HEK293 (cell line): ENCODE measurements at regions of chr1 and their contacts with region 1.

Region 1: DNA sequence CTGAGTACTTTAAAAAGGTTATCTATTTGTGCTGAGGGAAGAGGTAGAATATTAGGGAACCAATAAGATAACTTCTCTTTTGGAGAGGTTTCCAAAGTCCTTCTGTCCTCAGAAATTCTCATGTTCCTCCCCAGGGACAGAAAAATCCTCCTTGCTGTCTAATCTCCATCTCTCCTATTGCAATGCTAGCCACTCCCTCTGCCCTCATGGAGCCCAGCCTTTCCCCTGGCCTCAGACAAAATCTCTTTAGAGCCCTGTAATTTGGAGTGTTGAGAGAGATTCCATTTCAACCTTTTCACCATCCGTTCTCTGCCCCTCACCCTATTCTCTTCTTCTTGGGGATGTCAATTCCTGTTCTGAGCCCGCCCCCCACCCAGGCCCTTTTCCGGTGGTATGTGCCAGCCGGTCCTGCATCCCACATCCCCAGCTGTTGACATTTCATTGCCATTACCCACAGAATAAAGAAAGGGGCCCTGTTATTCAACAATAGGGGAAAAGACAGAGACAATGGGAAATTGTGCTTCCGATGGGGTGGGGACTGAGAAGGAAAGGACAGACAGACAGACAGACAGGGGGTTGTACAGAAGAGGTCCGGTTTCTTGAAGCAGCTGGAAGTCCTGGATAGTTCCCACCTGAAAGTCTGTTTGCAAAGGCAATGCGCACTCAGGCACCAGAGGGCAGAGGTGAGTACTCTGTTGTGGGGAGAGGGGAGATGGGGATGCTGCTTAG is at the start of gene HAPLN2:
- H3K4me3 ChIP-seq: no peak within 1 kb of the TSS
- H3K27ac ChIP-seq: no peak within 1 kb of the TSS
- H3K4me1 ChIP-seq: peaks cover 5% of the 10 kb centered on the region
- CTCF ChIP-seq: peak; percentile 54; the same call in 1 of the 2 replicates

Region 2: GRCh38 chr1:156553860-156554480 is 65.0 kb before region 1 on chr1:
- CTCF ChIA-PET with region 1: no interaction called
- POLR2A ChIA-PET with region 1: no interaction called
- H3K4me3 ChIP-seq: no peak overlapping the region
- H3K27ac ChIP-seq: no peak overlapping the region
- H3K4me1 ChIP-seq: no peaks in the 10 kb centered on the region
- CTCF ChIP-seq: no peak

Region 3: GRCh38 chr1:156601122-156601830 is 17.7 kb before region 1 on chr1 and contains the start of gene GPATCH4:
- CTCF ChIA-PET with region 1: interaction called, 30 read pairs
- POLR2A ChIA-PET with region 1: interaction called, 4 read pairs
- H3K4me3 ChIP-seq: peak within 1 kb of the TSS; percentile 65
- H3K27ac ChIP-seq: peak within 1 kb of the TSS; percentile 35
- H3K4me1 ChIP-seq: no peaks in the 10 kb centered on the region
- CTCF ChIP-seq: no peak